CD4-positive, alpha-beta memory T cell (primary cell): ENCODE measurements at regions of chr4 and their contacts with region 1.

Region 1: DNA sequence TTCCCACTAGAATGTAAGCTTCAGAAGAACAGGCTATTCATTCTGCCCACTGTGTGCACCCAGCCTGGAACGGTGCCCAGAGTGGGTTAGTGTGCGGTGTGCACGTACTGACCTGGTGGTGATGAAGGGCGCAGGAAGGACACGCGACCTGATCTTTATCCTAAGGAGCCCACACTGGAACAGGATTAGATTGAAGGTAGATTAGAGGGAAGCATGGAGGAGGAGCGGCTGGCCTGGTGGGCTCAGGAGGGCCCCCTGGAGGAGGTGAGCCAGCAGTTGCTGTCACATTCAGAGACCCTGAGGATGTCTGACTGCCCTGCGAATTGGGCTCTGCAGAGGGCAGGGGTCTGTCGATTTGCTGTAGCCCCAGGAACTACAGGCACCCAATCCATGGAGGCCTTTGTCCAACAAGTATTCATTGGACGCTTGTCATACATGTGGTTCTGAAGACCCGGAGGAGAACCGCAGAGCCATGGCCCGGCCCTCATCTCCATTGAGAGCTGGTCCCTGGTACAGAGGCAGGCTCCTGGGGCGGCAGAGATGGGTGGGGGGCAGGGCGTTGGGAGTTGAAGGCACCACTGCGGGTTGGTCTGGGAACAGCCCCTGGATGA is 73.2 kb downstream of the HTRA3 start:
- DNase-seq: no peak
- H3K4me3 ChIP-seq: no peak overlapping the region
- H3K4me3 Mint-ChIP-seq: no peak overlapping the region
- H3K27ac ChIP-seq: no peak overlapping the region
- H3K27ac Mint-ChIP-seq: no peak overlapping the region
- H3K4me1 ChIP-seq: no peaks in the 10 kb centered on the region
- H3K4me1 Mint-ChIP-seq: no peaks in the 10 kb centered on the region
- H3K27me3 ChIP-seq: no peaks in the 10 kb centered on the region
- H3K27me3 Mint-ChIP-seq: peaks cover 2 to 9% of the 10 kb centered on the region in 2 donors

Region 2: GRCh38 chr4:8365951-8366350 is 23.2 kb after region 1 on chr4:
- CTCF ChIA-PET with region 1: no interaction called
- POLR2A ChIA-PET with region 1: no interaction called
- intact Hi-C with region 1: loop called (anchors 1 kb)
- DNase-seq: no peak
- H3K4me3 ChIP-seq: no peak overlapping the region
- H3K4me3 Mint-ChIP-seq: no peak overlapping the region
- H3K27ac ChIP-seq: no peak overlapping the region
- H3K27ac Mint-ChIP-seq: no peak overlapping the region
- H3K4me1 ChIP-seq: no peaks in the 10 kb centered on the region
- H3K4me1 Mint-ChIP-seq: no peaks in the 10 kb centered on the region
- H3K27me3 ChIP-seq: no peaks in the 10 kb centered on the region
- H3K27me3 Mint-ChIP-seq: no peaks in the 10 kb centered on the region

Region 3: DNA sequence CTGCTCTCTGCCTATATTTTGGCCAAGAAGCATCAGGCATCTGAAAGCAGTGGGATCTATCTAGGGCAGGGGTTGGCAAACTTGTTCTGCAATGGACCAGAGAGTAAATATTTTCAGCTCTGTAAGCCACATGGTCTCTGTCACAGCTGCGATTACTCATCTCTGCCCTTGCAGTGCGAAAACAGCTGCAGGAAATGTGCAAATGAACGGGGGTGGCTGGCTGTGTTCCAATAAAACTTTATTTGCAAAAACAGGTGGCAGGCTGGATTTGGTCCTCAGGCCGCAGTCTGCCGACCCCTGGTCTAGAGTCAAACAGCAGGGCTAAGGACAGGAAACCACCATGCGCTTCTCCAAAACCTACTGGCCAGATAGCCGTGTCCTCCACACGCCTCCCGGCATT is 49.2 kb after region 1 on chr4:
- CTCF ChIA-PET with region 1: no interaction called
- POLR2A ChIA-PET with region 1: no interaction called
- intact Hi-C with region 1: no loop called
- DNase-seq: no peak
- H3K4me3 ChIP-seq: no peak overlapping the region
- H3K4me3 Mint-ChIP-seq: no peak overlapping the region
- H3K27ac ChIP-seq: no peak overlapping the region
- H3K27ac Mint-ChIP-seq: peak overlapping the region in 1 of 7 donors; percentile 51
- H3K4me1 ChIP-seq: no peaks in the 10 kb centered on the region
- H3K4me1 Mint-ChIP-seq: no peaks in the 10 kb centered on the region
- H3K27me3 ChIP-seq: no peaks in the 10 kb centered on the region
- H3K27me3 Mint-ChIP-seq: no peaks in the 10 kb centered on the region